ENCODE measurements at regions of chr2 and their contacts with region 1.

Region 1: DNA sequence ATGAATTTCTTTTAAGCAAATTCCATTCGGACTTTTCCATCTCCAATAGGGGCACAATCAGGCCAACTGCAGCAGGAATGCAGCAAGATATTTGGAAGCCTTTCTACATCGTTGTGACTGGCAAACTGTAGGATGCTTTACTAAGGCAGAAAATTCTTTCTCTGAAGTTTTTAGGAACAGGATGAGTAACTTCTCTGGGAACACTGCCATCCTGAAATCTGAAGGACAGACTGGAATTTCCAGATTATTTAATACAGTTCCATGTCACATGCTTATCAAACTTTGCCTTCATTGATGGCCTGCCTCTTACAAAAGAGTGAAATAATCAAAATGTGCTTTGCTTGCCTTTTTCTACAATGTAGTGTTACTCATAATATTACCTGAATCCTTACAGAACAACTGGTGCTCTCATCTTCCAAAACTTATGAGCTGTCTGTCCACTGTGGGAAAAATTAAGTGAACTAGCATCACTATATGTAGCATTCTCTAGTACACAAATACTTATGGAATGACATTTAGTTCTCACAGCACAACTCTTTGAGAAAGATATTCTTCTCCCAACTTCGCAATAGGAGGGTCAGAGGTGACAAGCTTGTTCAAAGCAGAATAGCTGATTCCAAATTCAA is 32.0 kb upstream of the MAP2 start:
- DNase-seq: no peak
- H3K4me3 ChIP-seq: no peak overlapping the region
- H3K27ac ChIP-seq: no peak overlapping the region
- H3K4me1 ChIP-seq: no peaks in the 10 kb centered on the region
- H3K27me3 ChIP-seq: peaks cover 0 to 7% of the 10 kb centered on the region in 2 experiments
- CTCF ChIP-seq: no peak
- POLR2A ChIP-seq: no peak

Region 2: DNA sequence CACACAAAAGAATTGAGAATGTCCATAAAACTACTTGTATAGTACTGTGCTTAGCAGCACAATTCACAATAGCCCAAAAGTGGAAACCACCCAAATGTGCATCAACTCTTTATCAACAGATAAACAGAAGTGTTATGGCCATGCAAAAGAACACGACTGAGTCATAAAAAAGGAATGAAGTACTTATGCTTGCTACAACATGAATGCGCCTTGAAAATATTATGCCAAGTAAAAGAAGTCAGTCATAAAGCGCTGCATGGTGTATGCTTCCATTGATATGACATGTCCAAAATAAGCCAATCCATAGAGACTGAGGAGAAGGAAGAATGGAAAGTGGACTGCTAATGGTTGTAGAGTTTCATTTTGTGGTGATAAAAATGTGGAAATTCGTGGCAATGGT is 19.8 kb after region 1 on chr2:
- CTCF ChIA-PET with region 1: interaction called, 4 read pairs
- POLR2A ChIA-PET with region 1: no interaction called
- dilution Hi-C with region 1: no loop called
- intact Hi-C with region 1: loop called (anchors 1 kb)
- DNase-seq: no peak
- H3K4me3 ChIP-seq: no peak overlapping the region
- H3K27ac ChIP-seq: no peak overlapping the region
- H3K4me1 ChIP-seq: no peaks in the 10 kb centered on the region
- H3K27me3 ChIP-seq: no peaks in the 10 kb centered on the region
- CTCF ChIP-seq: no peak
- POLR2A ChIP-seq: no peak

Measured in endothelial cell of umbilical vein (primary cell).